Activated CD8-positive, alpha-beta T cell treated with anti-CD3 and anti-CD28 coated beads for 36 hours (primary cell): ENCODE measurements at regions of chr9 and their contacts with region 1.

Region 1: GRCh38 chr9:21334701-21335632 is at the start of gene KLHL9:
- DNase-seq: peak; percentile 89
- ATAC-seq: peak; percentile 90
- H3K4me3 Mint-ChIP-seq: peak within 1 kb of the TSS; percentile 89
- H3K27ac Mint-ChIP-seq: peak within 1 kb of the TSS; percentile 89
- H3K4me1 Mint-ChIP-seq: peaks cover 47% of the 10 kb centered on the region
- H3K27me3 Mint-ChIP-seq: no peaks in the 10 kb centered on the region
- CTCF ChIP-seq: no peak
- total RNA-seq, gene KLHL9: 15.6 to 15.8 TPM

Region 2: DNA sequence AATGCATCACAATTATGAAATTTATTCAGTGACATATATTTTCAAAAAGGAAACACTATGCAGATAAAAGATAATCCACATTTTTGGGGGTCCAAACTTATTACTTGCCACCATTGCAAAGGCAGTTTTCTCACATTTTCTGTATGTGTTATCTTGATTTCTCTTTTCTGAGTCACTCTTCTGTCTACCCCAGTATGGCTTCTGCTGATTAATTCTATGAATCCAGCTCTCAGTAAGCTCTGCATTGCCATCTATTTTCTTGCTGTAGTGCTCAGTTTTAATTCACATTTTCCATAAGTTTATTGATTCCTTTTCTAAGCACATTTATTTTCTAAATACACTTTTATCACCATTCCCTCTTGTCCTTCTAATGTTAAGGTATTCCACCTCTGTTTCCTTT is 129.8 kb before region 1 on chr9:
- CTCF ChIA-PET with region 1: no interaction called
- POLR2A ChIA-PET with region 1: no interaction called
- intact Hi-C with region 1: no loop called
- DNase-seq: no peak
- ATAC-seq: peak; percentile 42
- H3K4me3 Mint-ChIP-seq: no peak overlapping the region
- H3K27ac Mint-ChIP-seq: no peak overlapping the region
- H3K4me1 Mint-ChIP-seq: peaks cover 5% of the 10 kb centered on the region
- H3K27me3 Mint-ChIP-seq: peaks cover 5% of the 10 kb centered on the region
- CTCF ChIP-seq: no peak

Region 3: GRCh38 chr9:21294325-21294724 is 40.6 kb before region 1 on chr9:
- CTCF ChIA-PET with region 1: no interaction called
- POLR2A ChIA-PET with region 1: no interaction called
- intact Hi-C with region 1: no loop called
- DNase-seq: peak; percentile 4
- ATAC-seq: peak; percentile 58
- H3K4me3 Mint-ChIP-seq: no peak overlapping the region
- H3K27ac Mint-ChIP-seq: no peak overlapping the region
- H3K4me1 Mint-ChIP-seq: peaks cover 9% of the 10 kb centered on the region
- H3K27me3 Mint-ChIP-seq: peaks cover 17% of the 10 kb centered on the region
- CTCF ChIP-seq: no peak

Region 4: DNA sequence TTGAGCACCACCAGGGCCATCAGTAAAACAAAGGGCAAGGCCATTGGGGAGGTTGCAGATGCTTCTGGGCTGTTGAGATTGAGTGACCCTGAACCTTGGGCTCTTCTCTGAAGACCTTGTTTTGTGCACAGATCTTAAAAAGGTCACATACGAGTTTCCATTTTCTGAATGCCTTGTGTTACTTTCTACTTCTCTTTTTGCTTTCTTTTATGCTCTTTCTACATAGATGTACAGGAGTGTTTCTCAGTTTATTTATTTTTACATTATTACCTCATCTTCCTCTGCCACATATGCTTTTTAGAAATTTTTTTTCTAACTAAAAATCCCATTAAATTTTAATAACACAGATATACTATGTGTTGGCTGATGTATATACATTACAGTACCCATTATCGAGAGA is 29.8 kb before region 1 on chr9 and contains the start of gene IFNA5:
- CTCF ChIA-PET with region 1: no interaction called
- POLR2A ChIA-PET with region 1: no interaction called
- intact Hi-C with region 1: no loop called
- DNase-seq: no peak
- ATAC-seq: no peak
- H3K4me3 Mint-ChIP-seq: no peak within 1 kb of the TSS
- H3K27ac Mint-ChIP-seq: no peak within 1 kb of the TSS
- H3K4me1 Mint-ChIP-seq: no peaks in the 10 kb centered on the region
- H3K27me3 Mint-ChIP-seq: peaks cover 35% of the 10 kb centered on the region
- CTCF ChIP-seq: no peak
- total RNA-seq, gene IFNA5: not detected

Region 5: DNA sequence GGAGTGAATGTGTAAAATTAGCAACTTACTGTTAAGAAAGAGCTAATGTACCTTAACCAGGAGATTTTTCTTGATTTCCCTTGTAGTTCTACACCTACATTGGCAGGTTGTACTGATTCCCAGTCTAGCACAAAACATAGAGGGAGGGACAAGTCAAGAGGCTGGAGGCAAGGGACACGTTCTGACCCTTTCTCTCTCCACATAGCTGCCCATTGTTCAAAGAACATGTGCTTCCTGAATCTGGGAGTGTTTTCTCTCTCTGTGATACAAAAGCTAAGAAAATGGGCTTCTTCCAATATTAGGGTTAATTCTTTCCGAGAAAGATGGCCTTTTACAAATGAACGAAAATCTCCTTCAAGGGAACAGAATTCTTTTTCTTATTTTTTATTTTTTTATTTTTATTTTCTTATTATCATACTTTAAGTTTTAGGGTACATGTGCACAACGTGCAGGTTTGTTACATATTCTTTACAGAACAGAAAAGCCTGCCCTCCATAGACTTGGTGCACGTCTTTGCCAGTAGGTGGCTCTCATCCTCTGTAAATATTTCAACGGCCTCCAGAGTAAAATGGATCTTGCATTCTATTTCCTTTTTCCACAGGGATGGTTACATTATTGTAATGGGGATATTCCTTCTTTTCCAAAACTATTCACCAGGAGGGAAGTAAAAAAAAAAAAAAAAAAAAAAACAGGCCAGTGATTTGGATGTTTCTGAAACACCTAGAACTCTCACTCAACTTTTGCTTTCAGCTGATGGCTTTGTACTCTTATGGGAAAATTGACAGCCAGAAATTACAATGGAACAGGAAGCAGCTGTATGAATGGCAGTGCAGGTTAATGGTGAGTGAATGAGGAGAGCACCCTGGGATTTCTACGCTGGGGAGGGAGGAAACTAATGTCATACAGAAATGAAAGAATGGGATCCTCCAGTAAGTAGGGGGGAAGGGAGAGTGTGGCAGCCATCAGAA is 16.7 kb before region 1 on chr9:
- CTCF ChIA-PET with region 1: interaction called, 26 read pairs
- POLR2A ChIA-PET with region 1: no interaction called
- intact Hi-C with region 1: no loop called
- DNase-seq: peak; percentile 61
- ATAC-seq: peak; percentile 76
- H3K4me3 Mint-ChIP-seq: no peak overlapping the region
- H3K27ac Mint-ChIP-seq: no peak overlapping the region
- H3K4me1 Mint-ChIP-seq: peaks cover 14% of the 10 kb centered on the region
- H3K27me3 Mint-ChIP-seq: no peaks in the 10 kb centered on the region
- CTCF ChIP-seq: peak; percentile 75

Region 6: DNA sequence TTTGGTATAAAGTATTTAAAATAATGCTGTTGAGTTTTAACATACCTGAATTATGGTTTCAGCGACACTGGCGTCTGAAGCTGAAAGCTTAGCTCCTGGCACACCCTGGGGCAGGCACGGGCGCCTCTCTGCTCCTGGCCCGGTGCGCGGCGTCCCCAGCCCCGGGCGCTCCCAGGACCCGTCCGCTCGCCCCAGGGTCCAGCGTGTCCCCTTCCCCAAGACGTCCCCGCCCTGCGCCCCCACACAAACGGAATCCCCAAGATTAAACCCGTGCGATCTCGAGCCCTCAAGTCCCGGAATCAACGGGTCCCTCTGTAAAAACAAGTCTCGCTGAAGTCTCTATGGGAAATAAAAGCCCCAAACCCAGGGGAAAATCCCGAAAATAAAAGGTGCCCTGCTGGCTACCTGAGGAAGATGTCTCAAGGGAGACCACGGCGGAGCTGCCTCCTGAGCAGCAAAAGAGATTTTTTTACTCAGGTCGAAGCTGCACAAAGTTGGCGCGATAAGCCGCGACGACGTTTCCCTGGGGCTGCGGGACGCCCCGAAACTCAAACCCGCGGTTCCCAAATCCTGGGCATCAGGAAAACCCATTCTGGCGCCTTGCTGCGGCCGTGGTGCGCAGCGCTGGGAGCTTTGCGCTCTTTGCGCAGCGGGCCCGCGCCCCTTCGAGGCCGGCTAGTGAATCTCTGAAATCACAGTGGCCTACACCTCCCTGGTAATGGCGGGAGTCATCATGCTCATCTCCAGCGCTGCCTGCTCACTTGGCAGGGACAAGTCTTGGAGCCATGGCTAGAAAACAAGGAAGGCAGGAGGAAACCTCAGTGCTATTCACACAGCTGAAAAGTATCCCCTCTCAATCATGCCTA is 67.7 kb after region 1 on chr9:
- CTCF ChIA-PET with region 1: interaction called, 17 read pairs
- POLR2A ChIA-PET with region 1: interaction called, 3 read pairs
- intact Hi-C with region 1: no loop called
- DNase-seq: peak; percentile 28
- ATAC-seq: peak; percentile 34
- H3K4me3 Mint-ChIP-seq: peak overlapping the region; percentile 61
- H3K27ac Mint-ChIP-seq: no peak overlapping the region
- H3K4me1 Mint-ChIP-seq: peaks cover 9% of the 10 kb centered on the region
- H3K27me3 Mint-ChIP-seq: peaks cover 46% of the 10 kb centered on the region
- CTCF ChIP-seq: peak; percentile 12

Region 7: GRCh38 chr9:21611896-21612295 is 276.9 kb after region 1 on chr9:
- CTCF ChIA-PET with region 1: no interaction called
- POLR2A ChIA-PET with region 1: no interaction called
- intact Hi-C with region 1: no loop called
- DNase-seq: peak; percentile 62
- ATAC-seq: peak; percentile 85
- H3K4me3 Mint-ChIP-seq: no peak overlapping the region
- H3K27ac Mint-ChIP-seq: peak overlapping the region; percentile 21
- H3K4me1 Mint-ChIP-seq: peaks cover 59% of the 10 kb centered on the region
- H3K27me3 Mint-ChIP-seq: no peaks in the 10 kb centered on the region
- CTCF ChIP-seq: no peak